AG04449 (cell line): ENCODE measurements at regions of chr3 and their contacts with region 1.

Region 1: GRCh38 chr3:69439643-69440270 is 53.9 kb upstream of the FRMD4B start:
- DNase-seq: no peak
- H3K4me3 ChIP-seq: no peak overlapping the region
- CTCF ChIP-seq: peak; percentile 38

Region 2: DNA sequence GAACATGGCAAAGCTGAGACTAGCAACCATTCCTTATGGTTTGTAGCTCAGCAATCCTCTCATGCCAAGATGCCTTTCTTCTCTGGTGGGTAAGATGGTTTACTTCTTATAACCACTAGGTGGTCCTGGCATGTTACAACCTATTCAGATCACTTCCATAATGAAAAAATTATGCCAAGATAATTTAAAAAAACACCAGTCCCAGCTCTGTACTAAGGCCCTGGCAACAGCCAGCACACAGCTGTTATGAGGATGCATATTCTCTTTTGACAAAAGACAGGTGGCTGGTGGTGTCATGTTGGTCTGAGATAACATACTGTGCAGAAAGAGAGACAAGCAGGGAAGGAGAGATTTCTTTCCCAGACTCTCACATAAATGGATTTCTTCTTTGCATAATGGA is 11.8 kb after region 1 on chr3:
- CTCF ChIA-PET with region 1: interaction called, 11 read pairs
- POLR2A ChIA-PET with region 1: no interaction called
- DNase-seq: no peak
- H3K4me3 ChIP-seq: no peak overlapping the region
- CTCF ChIP-seq: no peak